ENCODE measurements at regions of chr5 and their contacts with region 1.

Region 1: DNA sequence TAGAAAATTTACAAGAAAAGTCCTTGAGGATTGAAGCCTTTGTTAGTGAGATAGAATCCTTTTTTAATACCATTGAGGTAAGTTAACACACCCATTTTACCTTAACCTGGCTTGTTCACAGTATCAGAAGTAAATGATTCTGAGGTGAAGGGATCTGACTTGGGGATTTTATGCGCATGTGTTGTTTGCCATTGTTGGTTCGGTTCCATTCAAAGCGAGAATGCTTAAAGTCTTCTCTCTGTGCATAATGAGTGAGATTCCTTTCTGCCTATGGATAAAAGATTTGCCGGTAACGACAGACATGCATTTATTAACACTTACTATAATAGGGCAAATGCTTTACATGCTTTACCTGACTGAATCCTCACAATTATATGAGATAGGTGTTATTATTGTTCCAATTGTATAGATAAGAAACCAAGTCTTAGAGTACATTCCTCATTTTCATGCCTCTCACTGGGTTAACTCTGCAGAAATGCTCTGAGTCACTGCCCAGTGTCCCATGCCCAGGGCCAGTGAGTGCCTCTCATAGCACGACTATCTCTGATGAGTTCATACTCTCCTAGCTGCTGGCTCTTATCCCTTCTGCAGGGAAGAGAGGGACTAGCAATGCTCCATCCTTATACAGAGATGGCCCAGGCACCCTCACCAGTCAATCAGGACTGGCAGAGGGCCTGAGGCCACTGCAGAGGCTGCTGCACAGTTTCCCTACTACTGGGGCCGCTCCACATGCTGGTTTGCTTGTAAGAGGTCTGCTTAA is 54.4 kb downstream of the CMYA5 start:
- DNase-seq: no peak
- ATAC-seq: peak; percentile 63 to 90 (median 84)
- H3K4me3 ChIP-seq: no peak overlapping the region
- H3K27ac ChIP-seq: no peak overlapping the region
- H3K4me1 ChIP-seq: no peaks in the 10 kb centered on the region
- H3K27me3 ChIP-seq: no peaks in the 10 kb centered on the region
- CTCF ChIP-seq: no peak

Region 2: GRCh38 chr5:79982136-79982535 is 238.1 kb after region 1 on chr5:
- intact Hi-C with region 1: loop called in 1 of 2 experiments (anchors 10 kb)
- DNase-seq: no peak
- ATAC-seq: no peak
- H3K4me3 ChIP-seq: no peak overlapping the region
- H3K27ac ChIP-seq: no peak overlapping the region
- H3K4me1 ChIP-seq: no peaks in the 10 kb centered on the region
- H3K27me3 ChIP-seq: no peaks in the 10 kb centered on the region
- CTCF ChIP-seq: no peak

Measured in psoas muscle (tissue), 8 donors.